A549 (cell line): ENCODE measurements at regions of chr7 and their contacts with region 1.

Region 1: GRCh38 chr7:27739909-27740448 is at the start of gene TAX1BP1:
- DNase-seq: peak; percentile 86 to 94
- ATAC-seq: peak; percentile 96 to 97
- H3K4me3 ChIP-seq: peak within 1 kb of the TSS; percentile 94
- H3K27ac ChIP-seq: peak within 1 kb of the TSS; percentile 91 to 92
- H3K4me1 ChIP-seq: peaks cover 35% of the 10 kb centered on the region
- CTCF ChIP-seq: no peak
- EP300 ChIP-seq: no peak
- POLR2A ChIP-seq: peak; percentile 83
- RAD21 ChIP-seq: no peak
- polyA plus RNA-seq, gene TAX1BP1: 180 and 249 TPM in 2 replicates

Region 2: GRCh38 chr7:27774717-27775328 is 34.8 kb after region 1 on chr7:
- CTCF ChIA-PET with region 1: interaction called, 29 read pairs
- POLR2A ChIA-PET with region 1: interaction called, 7 read pairs
- DNase-seq: peak in 1 of 2 experiments; percentile 55
- ATAC-seq: peak in 1 of 2 experiments; percentile 67; a peak in 3 of 6 replicates
- H3K4me3 ChIP-seq: no peak overlapping the region
- H3K27ac ChIP-seq: no peak overlapping the region
- H3K4me1 ChIP-seq: peaks cover 26% of the 10 kb centered on the region
- CTCF ChIP-seq: peak; percentile 88
- EP300 ChIP-seq: no peak
- POLR2A ChIP-seq: no peak
- RAD21 ChIP-seq: peak; percentile 84 to 88